IMR-90 (cell line): ENCODE measurements at regions of chr1 and their contacts with region 1.

Region 1: DNA sequence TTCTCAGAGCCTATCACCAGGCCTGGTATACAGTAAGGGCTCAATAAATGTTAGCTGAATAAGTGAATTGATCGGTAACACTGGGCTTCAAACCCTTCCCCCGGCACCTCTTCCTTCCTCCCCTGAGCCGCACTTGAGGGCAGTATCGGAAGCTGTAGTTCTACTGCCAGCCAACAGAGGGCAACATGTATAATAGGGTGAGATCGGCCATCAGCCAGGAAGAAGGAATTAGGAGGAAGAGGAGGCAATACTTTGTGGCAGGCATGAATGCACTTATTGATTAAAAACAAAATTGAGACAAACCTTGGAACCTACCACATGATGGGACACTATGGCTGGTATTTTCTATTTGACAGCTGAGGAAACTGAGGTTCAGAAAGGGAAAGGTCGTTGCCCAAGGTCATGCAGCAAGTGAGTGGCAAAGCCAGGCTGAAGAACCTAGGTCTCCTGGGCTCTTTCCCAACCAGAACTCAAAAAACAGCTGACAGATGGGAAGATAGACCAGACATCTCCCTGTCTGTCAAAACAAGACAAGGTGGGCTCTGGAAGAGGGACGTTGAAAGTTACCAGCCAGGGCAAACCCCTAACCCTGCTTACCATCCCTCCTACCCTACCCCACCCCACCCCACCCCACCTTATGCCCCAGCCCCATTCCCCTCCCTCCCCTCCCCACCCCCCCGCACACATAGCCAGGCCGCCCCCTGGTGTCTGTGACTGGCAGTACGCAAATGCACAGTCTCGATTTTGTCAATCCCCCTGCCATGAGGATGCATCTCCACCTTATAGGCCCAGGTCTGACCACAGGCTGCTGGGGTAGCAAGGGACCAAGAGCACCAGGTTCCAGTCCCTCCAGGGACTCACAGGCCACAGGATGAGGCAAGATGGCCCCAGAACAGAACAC is 107.3 kb upstream of the RUNX3 start:
- DNase-seq: peak; percentile 13
- ATAC-seq: peak; percentile 87
- H3K4me3 ChIP-seq: no peak overlapping the region
- H3K27ac ChIP-seq: no peak overlapping the region
- H3K4me1 ChIP-seq: no peaks in the 10 kb centered on the region
- H3K27me3 ChIP-seq: peaks cover 25% of the 10 kb centered on the region
- CTCF ChIP-seq: peak; percentile 58
- POLR2A ChIP-seq: no peak
- RAD21 ChIP-seq: peak; percentile 58

Region 2: DNA sequence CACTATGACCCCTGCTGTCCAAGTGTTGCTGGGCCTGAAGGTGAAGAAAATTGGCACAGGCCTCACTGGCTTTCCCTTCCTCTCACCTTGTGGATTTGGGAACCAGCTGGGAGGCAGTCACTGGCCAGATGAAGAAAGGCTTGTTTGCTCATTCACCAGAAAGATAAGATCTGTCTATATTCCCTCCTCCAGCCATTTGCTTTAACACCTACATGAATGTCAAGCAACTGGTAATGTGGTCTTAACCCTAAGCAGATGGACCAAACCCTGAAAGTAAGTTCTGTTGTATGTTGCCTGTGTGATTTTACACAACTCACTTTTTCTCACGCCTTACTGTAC is 404.6 kb before region 1 on chr1:
- CTCF ChIA-PET with region 1: no interaction called
- POLR2A ChIA-PET with region 1: no interaction called
- dilution Hi-C with region 1: no loop called
- in situ Hi-C with region 1: no loop called
- intact Hi-C with region 1: no loop called
- DNase-seq: no peak
- ATAC-seq: no peak
- H3K4me3 ChIP-seq: no peak overlapping the region
- H3K27ac ChIP-seq: no peak overlapping the region
- H3K4me1 ChIP-seq: no peaks in the 10 kb centered on the region
- H3K27me3 ChIP-seq: peaks cover 18% of the 10 kb centered on the region
- CTCF ChIP-seq: no peak
- POLR2A ChIP-seq: no peak
- RAD21 ChIP-seq: no peak

Region 3: GRCh38 chr1:24847995-24848881 is 189.2 kb before region 1 on chr1:
- CTCF ChIA-PET with region 1: no interaction called
- POLR2A ChIA-PET with region 1: no interaction called
- dilution Hi-C with region 1: no loop called
- in situ Hi-C with region 1: no loop called
- intact Hi-C with region 1: loop called (anchors 2 kb)
- DNase-seq: peak; percentile 86
- ATAC-seq: peak; percentile 87
- H3K4me3 ChIP-seq: peak overlapping the region; percentile 28
- H3K27ac ChIP-seq: peak overlapping the region; percentile 12; the same call in 1 of the 2 replicates
- H3K4me1 ChIP-seq: peaks cover 8% of the 10 kb centered on the region; the same call in 1 of the 2 replicates
- H3K27me3 ChIP-seq: no peaks in the 10 kb centered on the region
- CTCF ChIP-seq: peak; percentile 80
- POLR2A ChIP-seq: peak; percentile 31; the same call in 1 of the 2 replicates
- RAD21 ChIP-seq: peak; percentile 76

Region 4: GRCh38 chr1:24930204-24931145 is 106.9 kb before region 1 on chr1 and contains the start of gene RUNX3:
- CTCF ChIA-PET with region 1: interaction called, 8 read pairs
- POLR2A ChIA-PET with region 1: no interaction called
- dilution Hi-C with region 1: no loop called
- in situ Hi-C with region 1: no loop called
- intact Hi-C with region 1: loop called (anchors 1 kb)
- DNase-seq: no peak
- ATAC-seq: 0 out of 2 replicates have a peak, but pooled peaks have one; percentile 24
- H3K4me3 ChIP-seq: peak within 1 kb of the TSS; percentile 31; the same call in 1 of the 2 replicates
- H3K27ac ChIP-seq: no peak within 1 kb of the TSS
- H3K4me1 ChIP-seq: peaks cover 2% of the 10 kb centered on the region; the same call in 1 of the 2 replicates
- H3K27me3 ChIP-seq: peaks cover 92% of the 10 kb centered on the region
- CTCF ChIP-seq: no peak
- POLR2A ChIP-seq: no peak
- RAD21 ChIP-seq: no peak
- total RNA-seq, gene RUNX3: not detected in 2 replicates

Region 5: DNA sequence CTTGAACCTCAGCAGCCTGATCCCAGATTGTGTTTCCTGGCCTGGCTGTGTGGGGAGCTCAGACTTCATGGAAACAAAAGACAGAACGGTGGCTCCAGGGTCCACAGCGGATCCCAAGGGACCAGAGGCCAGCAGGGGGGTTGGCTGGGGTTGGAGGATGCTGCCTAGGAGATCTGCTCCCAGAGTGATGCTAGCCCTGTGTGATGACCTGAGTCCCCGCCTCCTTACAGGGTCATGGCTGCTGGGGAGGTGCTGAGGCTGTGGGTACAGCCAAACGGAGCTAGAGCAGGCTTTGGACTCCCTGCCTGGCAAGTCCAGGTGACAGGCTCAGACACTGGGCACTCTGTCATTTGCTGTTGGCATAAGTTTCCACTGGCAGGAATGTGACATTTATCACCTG is 95.9 kb before region 1 on chr1:
- CTCF ChIA-PET with region 1: no interaction called
- POLR2A ChIA-PET with region 1: no interaction called
- dilution Hi-C with region 1: no loop called
- in situ Hi-C with region 1: loop called (anchors 5 kb)
- intact Hi-C with region 1: no loop called
- DNase-seq: no peak
- ATAC-seq: no peak
- H3K4me3 ChIP-seq: no peak overlapping the region
- H3K27ac ChIP-seq: no peak overlapping the region
- H3K4me1 ChIP-seq: no peaks in the 10 kb centered on the region
- H3K27me3 ChIP-seq: peaks cover 19% of the 10 kb centered on the region; the same call in 1 of the 2 replicates
- CTCF ChIP-seq: no peak
- POLR2A ChIP-seq: no peak
- RAD21 ChIP-seq: no peak